CD14-positive monocyte (primary cell): ENCODE measurements at regions of chr10 and their contacts with region 1.

Region 1: DNA sequence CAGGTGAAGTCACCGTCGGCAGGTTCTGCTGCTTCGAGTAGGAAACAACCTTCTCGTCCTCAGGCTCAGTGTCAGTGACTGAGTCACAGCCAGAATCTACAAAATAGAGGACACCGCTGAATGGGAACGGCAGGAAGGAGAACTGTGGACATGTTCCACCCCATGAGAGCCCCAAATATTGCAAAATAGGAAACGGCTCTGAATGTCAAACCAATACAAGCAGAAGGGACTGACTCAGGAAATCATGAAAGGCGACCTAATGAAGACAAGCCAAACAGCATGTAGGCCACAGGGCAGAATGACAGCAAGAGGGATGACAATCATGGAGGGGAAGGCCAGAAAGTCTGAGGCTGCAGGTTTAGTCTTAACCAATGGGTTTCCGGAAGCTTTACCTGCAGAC is 63.5 kb downstream of the PIK3AP1 start:
- DNase-seq: peak; percentile 81 to 95 (median 90)
- H3K4me3 ChIP-seq: peak overlapping the region; percentile 14 to 63 (median 21)
- H3K4me3 Mint-ChIP-seq: peak overlapping the region; percentile 74 to 87
- H3K27ac ChIP-seq: peak overlapping the region; percentile 77 to 85
- H3K27ac Mint-ChIP-seq: peak overlapping the region; percentile 93 to 98 (median 96)
- H3K4me1 ChIP-seq: peaks cover 95 to 97% of the 10 kb centered on the region in 2 donors
- H3K4me1 Mint-ChIP-seq: peaks cover 91% of the 10 kb centered on the region
- H3K27me3 ChIP-seq: no peaks in the 10 kb centered on the region
- H3K27me3 Mint-ChIP-seq: peaks cover 0 to 4% (median 2%) of the 10 kb centered on the region in 3 donors
- CTCF ChIP-seq: no peak

Region 2: DNA sequence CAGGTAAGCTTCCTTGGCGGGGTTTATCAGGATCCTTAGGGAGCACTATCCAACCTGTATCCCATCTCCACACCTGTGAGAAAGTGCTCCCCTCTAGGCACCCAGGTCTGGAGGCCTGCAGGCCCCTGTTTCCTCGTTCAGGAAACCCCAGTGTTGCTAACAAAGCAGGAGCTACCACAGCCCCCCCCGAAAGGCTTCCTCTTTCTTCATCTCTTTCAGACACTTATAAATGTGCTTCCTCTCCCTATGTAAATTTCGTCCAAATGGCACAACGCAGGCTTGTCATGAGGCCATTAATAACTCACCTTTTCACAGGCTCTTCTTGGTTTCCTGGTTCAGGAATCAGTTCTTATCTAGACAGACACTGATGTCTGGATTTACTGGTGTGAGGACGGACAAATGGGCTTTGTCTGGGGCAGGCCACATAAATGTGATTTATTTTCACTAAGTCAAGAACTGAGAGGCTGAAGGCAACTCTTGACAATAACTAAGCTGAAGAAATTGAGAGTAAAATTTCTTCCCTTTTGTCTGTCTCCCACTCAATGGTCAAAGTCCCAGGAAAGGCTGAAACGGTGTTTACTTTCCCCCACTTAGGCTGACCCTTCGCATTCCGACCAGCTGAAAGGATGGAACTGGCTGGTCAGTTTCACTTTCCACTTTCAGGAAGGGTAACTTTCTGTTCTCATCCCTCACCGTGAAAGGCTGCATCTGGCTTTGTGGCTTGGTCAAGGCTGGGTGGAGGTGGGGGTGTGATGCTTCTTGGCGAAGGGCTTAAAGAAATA is 16.7 kb after region 1 on chr10:
- intact Hi-C with region 1: loop called in 1 of 2 experiments (anchors 1 kb)
- DNase-seq: peak; percentile 83 to 97 (median 96)
- H3K4me3 ChIP-seq: peak overlapping the region; percentile 19 to 73 (median 69)
- H3K4me3 Mint-ChIP-seq: peak overlapping the region; percentile 78 to 90
- H3K27ac ChIP-seq: peak overlapping the region; percentile 79 to 98
- H3K27ac Mint-ChIP-seq: peak overlapping the region; percentile 97 to 100 (median 98)
- H3K4me1 ChIP-seq: peaks cover 55 to 65% of the 10 kb centered on the region in 2 donors
- H3K4me1 Mint-ChIP-seq: peaks cover 75% of the 10 kb centered on the region
- H3K27me3 ChIP-seq: no peaks in the 10 kb centered on the region
- H3K27me3 Mint-ChIP-seq: peaks cover 0 to 3% (median 0%) of the 10 kb centered on the region in 3 donors
- CTCF ChIP-seq: no peak

Region 3: GRCh38 chr10:96690755-96691731 is 34.2 kb after region 1 on chr10:
- intact Hi-C with region 1: loop called in 1 of 2 experiments (anchors 5 kb)
- DNase-seq: peak; percentile 35 to 81 (median 67)
- H3K4me3 ChIP-seq: no peak overlapping the region
- H3K4me3 Mint-ChIP-seq: no peak overlapping the region
- H3K27ac ChIP-seq: peak overlapping the region in 1 of 2 donors; percentile 68
- H3K27ac Mint-ChIP-seq: peak overlapping the region; percentile 19 to 91 (median 85)
- H3K4me1 ChIP-seq: peaks cover 51 to 63% of the 10 kb centered on the region in 2 donors
- H3K4me1 Mint-ChIP-seq: peaks cover 67% of the 10 kb centered on the region
- H3K27me3 ChIP-seq: no peaks in the 10 kb centered on the region
- H3K27me3 Mint-ChIP-seq: peaks cover 0 to 1% (median 0%) of the 10 kb centered on the region in 3 donors
- CTCF ChIP-seq: no peak